Activated CD4-positive, alpha-beta memory T cell treated with anti-CD3 and anti-CD28 coated beads, Interleukin-2, amount 10 ng/mL, durations not matched to agents 7 days and 5 days (primary cell): ENCODE measurements at regions of chr6 and their contacts with region 1.

Region 1: GRCh38 chr6:158536084-158536890 is 23.6 kb upstream of the TMEM181 start:
- DNase-seq: peak; percentile 83
- H3K4me3 Mint-ChIP-seq: peak overlapping the region; percentile 71
- H3K27ac Mint-ChIP-seq: no peak overlapping the region
- H3K4me1 Mint-ChIP-seq: peaks cover 14% of the 10 kb centered on the region
- H3K27me3 Mint-ChIP-seq: peaks cover 49% of the 10 kb centered on the region

Region 2: DNA sequence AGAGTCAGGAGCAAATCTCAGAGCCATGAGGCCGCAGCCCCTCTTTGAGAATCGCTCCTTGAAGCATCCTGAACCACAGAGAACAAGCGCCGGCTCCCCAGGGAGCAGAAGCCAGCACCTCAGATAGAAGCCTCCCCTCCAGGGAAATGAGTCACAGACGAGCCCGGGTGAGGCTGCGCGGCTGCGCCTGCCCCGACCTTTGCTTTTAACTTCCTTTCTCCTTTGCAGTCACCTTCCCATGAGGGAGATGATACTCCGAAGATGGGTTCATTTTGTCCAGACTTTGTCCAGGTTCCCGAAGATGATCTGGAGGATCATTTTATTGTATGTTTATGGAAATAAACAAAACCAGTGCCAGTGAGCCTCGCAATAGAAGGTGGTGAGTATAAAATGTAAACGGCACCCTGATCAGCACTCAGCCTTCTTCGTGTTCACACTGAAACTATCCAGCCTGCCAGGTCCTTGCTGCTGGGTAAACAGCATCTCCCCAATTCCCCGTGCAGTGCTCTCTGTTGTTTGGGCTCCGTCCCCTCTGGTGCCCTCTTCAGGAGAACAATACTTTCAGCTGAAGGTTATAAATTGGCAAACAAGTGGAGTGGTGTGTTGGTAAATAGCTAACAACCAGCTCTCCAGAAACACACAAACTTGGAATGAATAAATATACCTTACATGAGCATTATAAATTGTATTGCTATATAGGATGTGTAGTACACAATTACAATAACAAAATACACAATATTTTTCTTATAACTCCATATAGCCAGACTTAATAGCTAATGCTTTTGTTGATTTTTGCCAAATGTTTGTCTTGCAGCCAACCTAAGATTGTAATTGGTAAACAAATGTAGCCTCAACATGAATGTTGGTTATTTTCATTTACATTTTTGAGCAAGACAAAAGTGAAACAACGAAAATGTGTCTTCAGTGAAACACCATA is 17.8 kb before region 1 on chr6:
- CTCF ChIA-PET with region 1: interaction called, 18 read pairs
- POLR2A ChIA-PET with region 1: interaction called, 3 read pairs
- DNase-seq: peak; percentile 74
- H3K4me3 Mint-ChIP-seq: peak overlapping the region; percentile 81
- H3K27ac Mint-ChIP-seq: peak overlapping the region; percentile 87
- H3K4me1 Mint-ChIP-seq: peaks cover 41% of the 10 kb centered on the region
- H3K27me3 Mint-ChIP-seq: peaks cover 11% of the 10 kb centered on the region

Region 3: GRCh38 chr6:158559895-158560835 is 23.9 kb after region 1 on chr6 and contains the start of gene TMEM181:
- CTCF ChIA-PET with region 1: interaction called, 3 read pairs
- POLR2A ChIA-PET with region 1: interaction called, 13 read pairs
- DNase-seq: peak; percentile 90
- H3K4me3 Mint-ChIP-seq: peak within 1 kb of the TSS; percentile 98
- H3K27ac Mint-ChIP-seq: peak within 1 kb of the TSS; percentile 92
- H3K4me1 Mint-ChIP-seq: peaks cover 52% of the 10 kb centered on the region
- H3K27me3 Mint-ChIP-seq: peaks cover 5% of the 10 kb centered on the region
- total RNA-seq, gene TMEM181: 20.2 to 20.5 TPM